ENCODE measurements at regions of chr13 and their contacts with region 1.

Region 1: GRCh38 chr13:75219479-75220237 is 262.3 kb downstream of the TBC1D4 start:
- DNase-seq: peak; percentile 93
- H3K4me3 ChIP-seq: peak overlapping the region in 2 of 8 donors; percentile 10 to 24
- H3K27ac ChIP-seq: no peak overlapping the region
- H3K4me1 ChIP-seq: peaks cover 0 to 11% (median 8%) of the 10 kb centered on the region in 6 donors
- H3K27me3 ChIP-seq: peaks cover 0 to 22% (median 0%) of the 10 kb centered on the region in 7 donors
- CTCF ChIP-seq: peak; percentile 60 to 96 (median 91)
- POLR2A ChIP-seq: no peak

Region 2: GRCh38 chr13:73754727-73755292 is 1464.8 kb before region 1 on chr13:
- intact Hi-C with region 1: loop called (anchors 10 kb)
- DNase-seq: no peak
- H3K4me3 ChIP-seq: no peak overlapping the region
- H3K27ac ChIP-seq: no peak overlapping the region
- H3K4me1 ChIP-seq: peaks cover 0 to 10% (median 0%) of the 10 kb centered on the region in 6 donors
- H3K27me3 ChIP-seq: no peaks in the 10 kb centered on the region
- CTCF ChIP-seq: peak in 10 of 11 experiments; percentile 14 to 75 (median 66)
- POLR2A ChIP-seq: no peak

Region 3: GRCh38 chr13:73835138-73835721 is 1384.4 kb before region 1 on chr13:
- intact Hi-C with region 1: loop called (anchors 5 kb)
- DNase-seq: no peak
- H3K4me3 ChIP-seq: no peak overlapping the region
- H3K27ac ChIP-seq: no peak overlapping the region
- H3K4me1 ChIP-seq: peaks cover 0 to 40% (median 5%) of the 10 kb centered on the region in 6 donors
- H3K27me3 ChIP-seq: no peaks in the 10 kb centered on the region
- CTCF ChIP-seq: peak in 10 of 11 experiments; percentile 50 to 74 (median 66)
- POLR2A ChIP-seq: peak in 1 of 3 donors; percentile 8